Ovary (tissue), 10 donors: ENCODE measurements at regions of chr7 and their contacts with region 1.

Region 1: DNA sequence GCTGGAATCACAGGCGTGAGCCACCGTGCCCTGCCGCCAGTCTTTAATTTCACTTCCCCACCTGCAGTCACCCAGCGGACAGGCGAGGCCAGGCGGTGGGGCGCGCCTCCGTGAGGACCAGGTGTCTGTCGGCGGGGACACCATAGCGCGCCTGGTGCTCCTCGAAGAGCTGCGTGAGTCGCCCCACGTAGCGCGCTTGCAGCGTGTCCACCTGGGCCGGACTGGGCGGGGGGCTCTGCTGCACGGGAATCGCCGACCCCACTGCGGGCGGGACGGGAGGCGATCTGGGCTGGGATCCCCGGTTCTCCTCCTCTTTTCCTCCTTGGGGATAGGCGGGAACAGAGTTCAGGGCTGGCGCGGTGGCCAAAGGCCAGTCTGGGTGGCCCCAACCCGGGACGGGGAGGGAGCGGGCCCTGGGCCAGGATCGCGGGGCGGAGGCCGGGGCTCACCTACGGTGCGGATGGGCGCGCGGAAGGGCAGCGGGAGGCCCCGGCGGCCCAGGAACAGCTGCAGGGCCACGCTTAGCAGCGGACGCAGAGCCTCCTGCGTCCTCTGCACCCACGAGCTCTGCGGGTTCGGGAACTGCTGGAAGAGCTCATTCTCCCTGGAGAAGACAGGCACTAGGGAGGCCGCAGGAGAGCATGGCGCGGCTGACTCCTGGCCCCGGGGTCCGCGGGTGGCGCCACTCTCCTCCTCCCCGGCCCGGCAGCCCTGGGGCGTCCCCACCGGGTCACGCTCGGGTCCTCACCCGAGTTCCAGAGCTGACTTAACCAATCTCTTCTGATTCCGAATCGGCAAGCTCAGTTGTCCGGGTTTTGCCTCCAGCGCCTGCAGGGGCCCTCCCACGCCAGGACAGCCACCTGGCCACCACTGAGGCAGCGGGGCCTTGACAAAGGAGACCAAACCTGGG is 1.1 kb upstream of the MOGAT3 start:
- DNase-seq: no peak
- H3K4me3 ChIP-seq: no peak overlapping the region
- H3K27ac ChIP-seq: no peak overlapping the region
- H3K4me1 ChIP-seq: no peaks in the 10 kb centered on the region
- H3K27me3 ChIP-seq: peaks cover 4% of the 10 kb centered on the region
- CTCF ChIP-seq: no peak
- EP300 ChIP-seq: no peak
- POLR2A ChIP-seq: no peak

Region 2: DNA sequence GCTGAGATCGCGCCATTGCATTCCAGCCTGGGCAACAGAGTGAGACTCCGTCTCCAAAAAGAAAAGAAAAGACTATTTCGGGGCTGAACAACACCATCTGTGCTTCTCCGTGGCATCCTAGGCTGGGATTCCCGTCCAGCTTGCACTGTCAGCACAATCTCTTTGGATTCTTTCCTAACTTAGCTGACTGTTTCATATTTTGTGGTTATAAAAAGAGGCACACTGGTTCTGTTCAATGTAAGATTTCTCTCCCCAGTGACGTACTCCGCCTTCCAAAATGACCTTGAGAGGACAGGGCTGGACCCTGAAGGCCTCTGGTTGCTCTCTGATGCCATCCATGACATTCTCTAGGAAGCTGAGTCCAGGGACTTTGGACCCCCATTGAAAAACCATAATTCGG is 24.8 kb after region 1 on chr7:
- intact Hi-C with region 1: loop called in 1 of 4 experiments (anchors 1 kb)
- DNase-seq: no peak
- H3K4me3 ChIP-seq: no peak overlapping the region
- H3K27ac ChIP-seq: no peak overlapping the region
- H3K4me1 ChIP-seq: no peaks in the 10 kb centered on the region
- H3K27me3 ChIP-seq: no peaks in the 10 kb centered on the region
- CTCF ChIP-seq: no peak
- EP300 ChIP-seq: no peak
- POLR2A ChIP-seq: no peak